ENCODE measurements at regions of chr5 and their contacts with region 1.

Region 1: GRCh38 chr5:113513384-113514288 is at the start of gene YTHDC2:
- DNase-seq: peak; percentile 51 to 87
- ATAC-seq: peak; percentile 98 to 99
- H3K4me3 ChIP-seq: peak within 1 kb of the TSS; percentile 77
- H3K27ac ChIP-seq: peak within 1 kb of the TSS; percentile 89 to 94
- H3K4me1 ChIP-seq: peaks cover 13% of the 10 kb centered on the region; the same call in 2 of the 3 replicates
- CTCF ChIP-seq: peak; percentile 41
- EP300 ChIP-seq: no peak
- POLR2A ChIP-seq: peak; percentile 92
- RAD21 ChIP-seq: peak; percentile 39 to 51; a peak in 3 of 5 replicates
- polyA plus RNA-seq, gene YTHDC2: 16.5 and 19.0 TPM in 2 replicates

Region 2: GRCh38 chr5:113378959-113379541 is 134.6 kb before region 1 on chr5:
- CTCF ChIA-PET with region 1: interaction called, 36 read pairs
- POLR2A ChIA-PET with region 1: no interaction called
- DNase-seq: peak; percentile 56 to 67
- ATAC-seq: peak; percentile 70 to 82; a peak in 5 of 6 replicates
- H3K4me3 ChIP-seq: no peak overlapping the region
- H3K27ac ChIP-seq: no peak overlapping the region
- H3K4me1 ChIP-seq: no peaks in the 10 kb centered on the region
- CTCF ChIP-seq: peak; percentile 77
- EP300 ChIP-seq: no peak
- POLR2A ChIP-seq: no peak
- RAD21 ChIP-seq: peak; percentile 63 to 66

Region 3: GRCh38 chr5:113495422-113495841 is 18.2 kb before region 1 on chr5:
- CTCF ChIA-PET with region 1: interaction called, 13 read pairs
- POLR2A ChIA-PET with region 1: no interaction called
- DNase-seq: no peak
- ATAC-seq: no peak
- H3K4me3 ChIP-seq: no peak overlapping the region
- H3K27ac ChIP-seq: no peak overlapping the region
- H3K4me1 ChIP-seq: no peaks in the 10 kb centered on the region
- CTCF ChIP-seq: no peak
- EP300 ChIP-seq: no peak
- POLR2A ChIP-seq: no peak
- RAD21 ChIP-seq: no peak